ENCODE measurements at regions of chr7 and their contacts with region 1.

Region 1: DNA sequence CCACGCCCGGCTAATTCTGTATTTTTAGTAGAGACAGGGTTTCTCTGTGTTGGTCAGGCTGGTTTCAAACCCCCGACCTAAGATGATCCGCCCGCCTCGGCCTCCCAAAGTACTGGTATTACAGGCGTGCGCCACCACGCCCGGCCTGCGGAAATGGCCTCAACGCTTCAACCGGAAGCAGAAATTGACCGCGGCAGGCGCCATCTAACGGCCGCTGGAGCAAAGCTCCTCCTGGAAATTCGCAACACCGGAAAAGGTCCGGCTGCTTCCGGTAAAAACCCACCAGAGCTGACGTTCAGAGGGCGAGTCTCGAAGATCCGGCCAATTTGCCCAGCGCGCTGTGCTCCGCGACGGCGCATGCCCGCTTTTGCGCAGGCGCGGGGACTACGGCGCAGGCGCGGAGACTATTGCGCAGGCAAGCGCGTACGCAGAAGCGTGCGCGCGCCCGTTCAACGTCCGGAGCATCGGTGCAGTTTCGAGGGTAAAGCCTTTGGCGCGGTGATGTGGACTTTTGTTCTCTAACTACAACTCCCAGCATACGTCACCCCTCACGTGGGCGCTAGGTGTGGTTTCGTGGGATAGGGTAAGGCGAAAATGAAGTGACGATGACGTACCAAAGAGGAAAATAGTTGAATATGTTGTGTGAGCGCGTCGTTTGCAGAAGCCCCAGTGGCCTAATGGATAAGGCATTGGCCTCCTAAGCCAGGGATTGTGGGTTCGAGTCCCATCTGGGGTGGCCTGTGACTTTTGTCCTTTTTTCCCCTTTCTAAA is 915 bp upstream of the FMC1 start:
- DNase-seq: peak; percentile 99
- ATAC-seq: peak; percentile 93

Region 2: DNA sequence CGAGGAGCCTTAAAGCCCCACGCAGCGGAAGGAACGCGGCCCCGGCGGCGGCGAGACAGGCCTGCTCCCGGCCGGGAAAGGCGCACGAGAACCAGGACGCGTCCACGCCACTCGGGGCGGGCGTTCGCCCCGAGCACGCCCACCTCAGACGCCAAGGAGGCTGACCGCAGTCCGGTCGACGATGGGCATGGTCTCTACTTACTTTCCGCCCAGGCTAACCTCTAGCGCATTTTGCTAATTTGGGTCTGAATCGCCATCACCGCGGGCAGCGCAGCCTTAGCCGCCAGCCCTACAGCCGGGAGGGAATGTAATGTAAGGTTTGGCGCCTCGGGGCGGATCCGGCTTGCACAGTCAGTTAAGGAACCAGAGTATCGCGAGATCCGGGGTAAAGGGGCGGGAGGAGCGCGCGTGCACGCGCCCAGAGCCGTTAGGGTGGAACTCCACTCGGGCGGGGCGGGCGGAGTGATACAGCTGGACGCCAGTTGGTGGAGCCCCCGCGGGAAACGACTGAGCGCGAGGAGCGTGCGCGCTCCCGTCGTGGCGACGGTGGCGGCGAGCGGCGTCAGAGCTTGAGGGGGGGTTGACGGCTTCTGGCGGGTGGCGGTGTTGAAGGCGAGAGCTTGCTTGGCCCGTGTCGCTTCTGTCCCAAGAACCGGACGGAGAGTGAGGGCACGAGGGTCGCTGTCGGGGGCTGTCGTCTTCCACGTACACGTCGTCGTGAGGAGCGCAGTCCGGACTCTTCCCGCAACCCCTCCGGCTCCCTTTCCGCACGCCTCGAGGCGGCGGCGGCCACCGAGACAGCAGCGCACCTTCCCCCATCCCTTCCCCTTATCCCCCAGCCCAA is 19.4 kb after region 1 on chr7 and contains the start of gene LUC7L2:
- intact Hi-C with region 1: loop called (anchors 1 kb)
- DNase-seq: peak; percentile 100
- ATAC-seq: peak; percentile 97
- total RNA-seq, gene LUC7L2: 44.9 TPM